CD14-positive monocyte (primary cell): ENCODE measurements at regions of chr12 and their contacts with region 1.

Region 1: DNA sequence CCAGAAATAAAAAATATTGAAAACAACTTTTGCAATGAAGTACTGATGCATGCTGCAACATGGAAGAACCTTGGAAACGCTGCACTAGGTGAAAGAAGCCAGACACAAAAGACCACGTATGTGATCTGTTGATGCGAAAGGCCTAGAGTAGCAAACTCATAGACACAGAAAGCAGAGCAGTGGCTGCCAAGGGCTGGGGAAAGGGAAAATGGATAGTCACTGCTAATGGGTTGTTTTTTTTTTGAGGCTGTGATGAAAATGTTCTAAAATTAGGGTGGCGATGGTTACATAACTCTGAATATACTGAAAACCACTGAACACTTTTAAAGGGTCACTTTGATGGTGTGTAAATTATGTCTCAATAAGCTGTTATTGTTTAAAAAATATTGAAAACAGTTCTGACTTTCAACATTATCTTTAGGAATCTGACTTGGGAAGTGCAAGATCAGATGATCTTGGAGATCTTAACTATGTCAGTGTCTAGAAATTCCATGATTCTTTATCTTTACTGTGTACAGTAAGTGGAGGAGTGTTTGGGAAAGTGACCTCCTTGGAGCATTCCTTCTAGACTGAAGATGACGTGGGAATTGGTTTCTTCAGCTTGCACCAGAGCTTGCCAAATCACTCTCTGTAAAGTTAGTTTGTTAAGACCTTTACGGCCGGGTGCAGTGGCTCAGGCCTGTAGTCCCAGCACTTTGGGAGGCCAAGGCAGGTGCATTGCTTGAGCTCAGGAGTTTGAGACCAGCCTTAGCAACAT is 12.4 kb downstream of the MLXIP start:
- DNase-seq: no peak
- H3K4me3 ChIP-seq: peak overlapping the region in 1 of 3 experiments; percentile 23
- H3K4me3 Mint-ChIP-seq: peak overlapping the region in 1 of 2 donors; percentile 40
- H3K27ac ChIP-seq: peak overlapping the region; percentile 63 to 66
- H3K27ac Mint-ChIP-seq: peak overlapping the region in 6 of 7 donors; percentile 61 to 87 (median 74)
- H3K4me1 ChIP-seq: peaks cover 37 to 42% of the 10 kb centered on the region in 2 donors
- H3K4me1 Mint-ChIP-seq: peaks cover 26% of the 10 kb centered on the region
- H3K27me3 ChIP-seq: no peaks in the 10 kb centered on the region
- H3K27me3 Mint-ChIP-seq: peaks cover 0 to 1% (median 1%) of the 10 kb centered on the region in 3 donors
- CTCF ChIP-seq: no peak

Region 2: DNA sequence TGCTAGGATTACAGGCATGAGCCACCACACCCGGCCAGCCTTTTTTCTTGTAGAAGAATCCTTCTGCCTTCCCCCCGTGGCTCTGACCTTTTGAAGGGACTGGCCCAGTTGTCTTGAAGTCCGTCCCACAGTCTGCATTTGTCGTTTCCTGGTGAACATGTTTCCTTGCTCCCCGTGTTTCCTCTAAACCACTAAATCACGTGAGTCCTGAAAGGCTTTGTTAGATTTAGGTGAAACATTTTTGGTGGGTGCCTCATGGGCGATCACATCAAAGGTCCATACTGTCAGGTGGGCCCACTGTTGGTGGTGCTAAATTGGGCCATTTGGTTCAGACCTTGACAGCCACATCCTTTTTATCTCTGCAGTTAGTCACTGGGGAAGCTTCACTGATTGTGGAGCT is 13.9 kb after region 1 on chr12:
- intact Hi-C with region 1: loop called in 1 of 2 experiments (anchors 2 kb)
- DNase-seq: no peak
- H3K4me3 ChIP-seq: peak overlapping the region in 1 of 3 experiments; percentile 54
- H3K4me3 Mint-ChIP-seq: peak overlapping the region in 1 of 2 donors; percentile 78
- H3K27ac ChIP-seq: peak overlapping the region; percentile 4 to 63
- H3K27ac Mint-ChIP-seq: peak overlapping the region; percentile 57 to 91 (median 88)
- H3K4me1 ChIP-seq: peaks cover 49 to 50% of the 10 kb centered on the region in 2 donors
- H3K4me1 Mint-ChIP-seq: peaks cover 72% of the 10 kb centered on the region
- H3K27me3 ChIP-seq: no peaks in the 10 kb centered on the region
- H3K27me3 Mint-ChIP-seq: no peaks in the 10 kb centered on the region
- CTCF ChIP-seq: no peak

Region 3: GRCh38 chr12:122148657-122149056 is 57.7 kb after region 1 on chr12:
- intact Hi-C with region 1: no loop called
- DNase-seq: no peak
- H3K4me3 ChIP-seq: no peak overlapping the region
- H3K4me3 Mint-ChIP-seq: no peak overlapping the region
- H3K27ac ChIP-seq: no peak overlapping the region
- H3K27ac Mint-ChIP-seq: peak overlapping the region in 2 of 7 donors; percentile 3 to 19
- H3K4me1 ChIP-seq: no peaks in the 10 kb centered on the region
- H3K4me1 Mint-ChIP-seq: peaks cover 7% of the 10 kb centered on the region
- H3K27me3 ChIP-seq: no peaks in the 10 kb centered on the region
- H3K27me3 Mint-ChIP-seq: peaks cover 1 to 9% (median 8%) of the 10 kb centered on the region in 3 donors
- CTCF ChIP-seq: no peak